ENCODE measurements at regions of chr2 and their contacts with region 1.

Region 1: GRCh38 chr2:189696223-189696622 is 21.8 kb downstream of the ANKAR start:
- DNase-seq: no peak
- H3K4me3 ChIP-seq: no peak overlapping the region
- CTCF ChIP-seq: no peak
- POLR2A ChIP-seq: no peak

Region 2: DNA sequence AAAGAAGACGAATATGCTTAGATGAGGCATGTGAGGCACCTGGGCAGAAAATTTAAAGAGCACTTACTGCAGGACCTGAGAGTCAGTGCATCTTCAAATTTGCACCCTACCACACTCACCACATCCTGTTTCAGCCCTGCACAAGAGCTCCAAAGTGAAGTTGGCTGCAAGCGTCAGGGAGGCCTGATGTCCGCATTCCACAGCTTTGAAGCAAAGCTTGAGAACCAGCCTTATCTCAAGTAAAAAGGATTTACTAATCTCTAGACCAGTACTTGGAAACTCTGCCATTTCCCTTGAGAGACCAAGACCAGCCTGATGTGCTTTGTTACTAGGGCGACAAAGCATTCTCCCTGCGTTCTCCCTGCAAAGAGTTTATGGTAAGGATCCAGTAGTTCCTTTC is 38.4 kb before region 1 on chr2:
- intact Hi-C with region 1: loop called (anchors 2 kb)
- DNase-seq: no peak
- H3K4me3 ChIP-seq: no peak overlapping the region
- CTCF ChIP-seq: no peak
- POLR2A ChIP-seq: no peak

Measured in lower leg skin (tissue), 4 donors.